Dendritic cell treated with granulocyte-macrophage colony-stimulating factor and Interleukin-4, amounts not matched to agents 40 ng/mL and 50 ng/mL, for 4 days (primary cell): ENCODE measurements at regions of chr9 and their contacts with region 1.

Region 1: GRCh38 chr9:124852829-124853531 is at the start of gene WDR38:
- H3K4me3 Mint-ChIP-seq: peak within 1 kb of the TSS; percentile 78
- H3K27ac Mint-ChIP-seq: peak within 1 kb of the TSS; percentile 57
- H3K4me1 Mint-ChIP-seq: peaks cover 6% of the 10 kb centered on the region
- H3K27me3 Mint-ChIP-seq: peaks cover 30% of the 10 kb centered on the region

Region 2: DNA sequence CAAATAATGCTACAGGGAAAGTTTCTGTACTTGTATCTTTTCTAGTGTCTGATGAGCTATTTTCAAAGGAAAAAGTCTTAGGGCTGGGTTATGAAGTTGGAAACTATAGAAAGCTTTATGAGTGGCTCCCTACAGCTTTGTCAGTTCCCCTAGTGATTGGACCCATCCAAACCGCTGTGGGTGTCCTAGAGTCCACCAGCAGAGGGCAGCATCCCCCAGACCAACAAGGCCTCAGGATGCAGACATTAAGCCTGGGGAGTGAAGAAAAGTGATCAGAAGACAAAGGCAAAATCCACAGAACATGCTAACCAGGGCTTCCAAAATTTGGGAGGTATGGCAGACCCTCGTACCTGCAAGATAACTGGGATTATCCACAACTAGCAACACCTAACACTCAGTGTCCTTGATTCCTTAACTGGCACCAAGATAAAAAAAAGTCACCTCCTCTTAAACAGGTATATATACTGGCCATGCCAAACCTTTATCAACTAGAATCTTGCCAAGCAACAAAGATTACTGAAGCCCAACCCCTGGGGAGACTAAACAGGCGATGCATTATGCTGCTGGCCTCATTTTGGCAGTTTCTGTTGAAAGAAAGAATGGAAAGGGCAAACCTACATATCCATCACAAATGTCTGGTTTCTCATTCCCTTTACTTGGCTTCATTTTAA is 235.4 kb before region 1 on chr9:
- intact Hi-C with region 1: loop called (anchors 10 kb)
- H3K4me3 Mint-ChIP-seq: no peak overlapping the region
- H3K27ac Mint-ChIP-seq: no peak overlapping the region
- H3K4me1 Mint-ChIP-seq: peaks cover 5% of the 10 kb centered on the region
- H3K27me3 Mint-ChIP-seq: no peaks in the 10 kb centered on the region

Region 3: DNA sequence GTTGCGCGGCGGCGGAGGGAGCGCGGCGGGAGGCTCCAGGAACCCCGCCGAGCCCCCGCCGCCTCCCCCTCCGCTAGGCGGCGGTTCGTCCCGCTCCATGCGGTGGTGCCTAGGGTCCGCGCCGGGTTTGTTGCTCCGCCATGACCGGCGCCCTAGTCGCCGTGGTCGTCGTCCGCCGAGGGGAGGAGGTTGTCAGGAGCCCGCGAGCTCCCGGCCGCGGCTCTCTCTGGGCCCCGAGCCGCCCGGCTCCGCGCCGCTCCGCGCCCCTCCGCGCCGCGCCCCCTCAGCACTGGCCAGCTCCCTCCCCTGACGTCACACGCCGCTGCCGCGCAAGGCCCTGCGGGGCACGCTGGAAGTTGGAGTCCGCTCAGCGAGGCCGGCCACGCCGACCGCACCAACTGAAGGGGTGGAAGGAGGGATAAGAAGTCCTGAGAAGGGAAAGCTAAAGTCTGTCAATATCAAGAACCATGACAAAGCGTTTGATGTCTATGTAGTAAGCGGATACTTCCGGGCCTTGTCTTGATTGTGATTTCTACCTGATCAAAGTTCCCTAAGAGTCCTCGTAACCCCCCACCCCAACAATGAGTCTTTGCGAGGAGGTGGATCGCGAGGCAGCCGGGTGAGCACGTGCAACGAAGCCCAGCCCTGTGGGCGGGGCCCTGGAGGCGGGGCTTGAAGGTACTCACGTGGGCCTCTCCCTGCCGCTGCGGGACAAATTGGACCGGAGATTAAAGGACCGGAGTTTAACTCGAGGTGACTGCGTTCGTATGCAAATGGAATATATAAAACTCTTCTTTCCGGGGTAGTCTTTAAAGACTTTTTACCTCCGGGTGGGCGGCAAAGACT is 81.7 kb before region 1 on chr9 and contains the start of gene NR6A1:
- intact Hi-C with region 1: loop called (anchors 1 kb)
- H3K4me3 Mint-ChIP-seq: peak within 1 kb of the TSS; percentile 92
- H3K27ac Mint-ChIP-seq: peak within 1 kb of the TSS; percentile 97
- H3K4me1 Mint-ChIP-seq: peaks cover 55% of the 10 kb centered on the region
- H3K27me3 Mint-ChIP-seq: peaks cover 30% of the 10 kb centered on the region

Region 4: GRCh38 chr9:125374443-125375309 is 521.7 kb after region 1 on chr9:
- intact Hi-C with region 1: loop called (anchors 5 kb)
- H3K4me3 Mint-ChIP-seq: peak overlapping the region; percentile 68
- H3K27ac Mint-ChIP-seq: no peak overlapping the region
- H3K4me1 Mint-ChIP-seq: peaks cover 13% of the 10 kb centered on the region
- H3K27me3 Mint-ChIP-seq: peaks cover 10% of the 10 kb centered on the region